ENCODE measurements at regions of chr1 and their contacts with region 1.

Region 1: DNA sequence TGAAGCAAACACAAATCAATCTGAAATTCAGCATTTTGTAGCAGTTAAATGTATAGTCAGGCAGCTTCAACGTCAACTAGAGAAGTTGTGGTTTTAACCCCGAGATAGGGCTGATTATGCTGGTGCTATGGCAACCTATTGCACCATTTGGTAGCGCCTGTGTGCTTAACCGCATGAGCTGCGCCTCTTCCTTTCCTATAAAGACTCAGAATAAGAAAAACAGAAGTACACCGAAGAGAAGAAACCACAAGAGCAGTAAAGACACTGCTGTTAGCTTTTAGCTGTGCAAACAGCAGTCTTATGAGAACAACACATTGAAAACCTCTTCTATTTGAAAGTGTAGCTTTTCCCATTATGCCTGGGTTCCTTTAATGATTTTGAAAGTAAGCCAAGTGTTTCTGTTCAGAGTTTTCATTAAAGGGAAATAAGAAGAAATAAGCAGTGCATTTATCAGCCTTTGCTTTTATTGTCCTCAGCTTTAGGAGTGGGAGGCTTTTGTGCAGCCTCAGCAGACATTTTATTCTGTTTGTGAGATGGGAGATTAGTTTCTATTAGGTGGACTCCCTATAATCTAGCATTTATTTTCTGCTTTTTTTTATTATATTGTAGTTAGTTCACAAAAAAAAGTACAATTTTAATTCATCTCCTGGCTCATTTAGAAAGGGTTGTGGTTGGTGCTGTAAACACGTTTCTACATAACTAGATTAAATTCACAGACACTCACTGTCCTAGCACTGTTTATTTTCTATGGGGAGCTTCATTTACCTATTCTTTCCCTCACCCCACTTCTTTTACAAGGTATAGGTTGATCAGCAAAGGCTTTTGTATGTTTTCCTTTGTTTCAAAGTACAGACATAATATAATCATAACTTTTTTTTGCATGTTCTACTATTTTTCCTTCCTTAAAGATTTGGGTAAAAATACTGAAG is 43.3 kb downstream of the PTPRC start:
- DNase-seq: peak; percentile 97
- ATAC-seq: peak; percentile 93
- H3K4me3 ChIP-seq: peak overlapping the region; percentile 12; the same call in 1 of the 2 replicates
- H3K27ac ChIP-seq: peak overlapping the region; percentile 81
- H3K4me1 ChIP-seq: peaks cover 63% of the 10 kb centered on the region
- H3K27me3 ChIP-seq: no peaks in the 10 kb centered on the region
- CTCF ChIP-seq: no peak
- EP300 ChIP-seq: peak; percentile 77 to 98
- POLR2A ChIP-seq: peak; percentile 48
- RAD21 ChIP-seq: peak; percentile 32

Region 2: DNA sequence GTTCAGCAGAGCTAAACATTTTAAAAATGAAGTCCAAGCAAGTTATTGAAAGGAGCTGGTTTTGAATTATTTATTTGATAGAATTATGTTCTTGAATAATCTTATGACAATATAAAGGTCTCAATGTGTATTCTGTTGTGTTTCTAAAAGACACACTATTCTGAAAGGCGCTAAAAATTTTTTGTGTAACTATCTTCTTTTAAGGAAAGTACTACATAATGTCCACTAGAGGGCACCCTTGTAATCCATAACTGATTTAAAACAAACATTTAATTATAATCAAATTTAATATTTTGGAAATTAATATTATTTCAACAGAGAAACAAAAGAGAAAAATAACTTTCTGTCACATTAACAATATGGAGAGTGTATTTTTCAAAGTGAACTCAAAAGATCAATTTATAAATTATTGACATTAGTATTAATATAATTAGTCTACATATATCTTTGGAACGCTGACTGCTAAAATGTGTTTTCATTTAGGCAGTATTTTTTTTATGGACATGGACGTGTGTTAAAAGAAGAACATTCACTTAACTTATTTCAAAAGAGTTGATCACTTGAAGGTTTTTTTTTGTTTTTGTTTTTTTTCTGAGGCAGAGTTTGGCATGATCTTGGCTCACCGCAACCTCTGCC is 1155.2 kb before region 1 on chr1:
- CTCF ChIA-PET with region 1: no interaction called
- POLR2A ChIA-PET with region 1: no interaction called
- RAD21 ChIA-PET with region 1: no interaction called
- SMC1A ChIA-PET with region 1: no interaction called
- in situ Hi-C with region 1: loop called (anchors 25 kb)
- intact Hi-C with region 1: no loop called
- DNase-seq: no peak
- ATAC-seq: no peak
- H3K4me3 ChIP-seq: no peak overlapping the region
- H3K27ac ChIP-seq: no peak overlapping the region
- H3K4me1 ChIP-seq: no peaks in the 10 kb centered on the region
- H3K27me3 ChIP-seq: no peaks in the 10 kb centered on the region
- CTCF ChIP-seq: peak in 2 of 3 experiments; percentile 29 to 39; a peak in 3 of 6 replicates
- EP300 ChIP-seq: no peak
- POLR2A ChIP-seq: no peak
- RAD21 ChIP-seq: peak; percentile 35; the same call in 1 of the 2 replicates

Region 3: DNA sequence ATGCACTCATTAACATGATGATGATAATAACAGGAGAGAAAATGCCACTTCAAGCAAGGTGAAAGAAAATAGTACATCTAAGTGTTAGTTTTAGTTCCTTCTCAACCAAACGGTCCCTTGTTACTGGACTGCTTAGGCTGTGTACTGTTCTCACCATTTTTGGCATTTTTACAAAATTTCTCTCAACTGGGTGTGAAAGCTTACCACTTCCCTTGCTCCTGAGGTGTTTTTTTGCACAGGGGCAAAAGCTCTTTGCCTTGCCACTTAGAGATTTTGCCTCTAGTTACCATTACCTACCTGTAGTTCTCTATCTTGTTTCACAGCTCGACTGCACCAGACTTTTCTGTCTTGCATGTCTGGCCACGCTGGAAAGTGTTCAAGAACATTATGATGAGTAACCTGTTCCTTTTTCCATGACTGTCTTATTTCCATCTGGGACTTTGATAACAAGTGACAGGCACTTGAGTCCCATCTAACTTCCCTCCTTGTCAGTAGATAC is 514.6 kb before region 1 on chr1:
- CTCF ChIA-PET with region 1: no interaction called
- POLR2A ChIA-PET with region 1: interaction called, 4 read pairs
- RAD21 ChIA-PET with region 1: interaction called, 4 read pairs
- SMC1A ChIA-PET with region 1: interaction called, 5 read pairs
- in situ Hi-C with region 1: loop called (anchors 10 kb)
- intact Hi-C with region 1: no loop called
- DNase-seq: peak; percentile 85
- ATAC-seq: peak; percentile 80
- H3K4me3 ChIP-seq: peak overlapping the region; percentile 57
- H3K27ac ChIP-seq: peak overlapping the region; percentile 59
- H3K4me1 ChIP-seq: peaks cover 47% of the 10 kb centered on the region
- H3K27me3 ChIP-seq: no peaks in the 10 kb centered on the region
- CTCF ChIP-seq: no peak
- EP300 ChIP-seq: peak; percentile 67 to 89; a peak in 3 of 4 replicates
- POLR2A ChIP-seq: no peak
- RAD21 ChIP-seq: no peak

Region 4: DNA sequence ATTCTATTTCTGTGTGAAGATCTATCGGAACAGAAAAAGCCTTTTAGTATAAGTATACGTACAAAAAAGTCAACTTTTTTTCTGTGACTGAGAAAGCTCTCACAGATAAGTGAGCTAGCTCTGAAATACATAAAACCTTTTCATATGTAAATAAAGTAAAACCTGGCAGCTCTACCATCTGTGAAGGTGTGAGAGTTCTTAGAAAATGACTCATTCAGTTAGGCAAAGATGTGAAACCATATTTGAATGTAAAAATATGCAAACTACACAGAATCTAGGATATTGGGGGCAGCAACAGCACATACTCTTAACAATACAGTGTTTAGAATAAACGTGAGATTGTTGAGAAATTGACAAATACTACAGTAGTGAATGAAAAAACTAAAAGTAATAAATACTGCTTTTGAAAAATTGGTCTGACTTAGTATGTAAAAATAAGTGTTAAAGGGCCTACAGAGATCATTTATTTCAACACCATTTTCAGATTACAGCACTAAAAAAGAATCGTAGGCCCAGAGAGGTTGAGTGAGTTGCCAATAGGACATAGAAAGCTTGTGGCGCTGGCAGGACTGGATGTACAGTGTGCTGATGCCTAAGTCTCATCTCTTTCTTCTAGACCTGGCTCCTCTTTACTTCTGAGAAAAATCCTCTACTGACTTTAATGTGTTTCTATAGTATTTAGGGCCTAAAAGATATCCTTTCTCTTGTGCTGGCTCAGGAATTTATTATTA is 161.4 kb before region 1 on chr1:
- CTCF ChIA-PET with region 1: interaction called, 15 read pairs
- POLR2A ChIA-PET with region 1: no interaction called
- RAD21 ChIA-PET with region 1: interaction called, 19 read pairs
- SMC1A ChIA-PET with region 1: interaction called, 12 read pairs
- in situ Hi-C with region 1: no loop called
- intact Hi-C with region 1: loop called (anchors 5 kb)
- DNase-seq: peak; percentile 55
- ATAC-seq: peak; percentile 91
- H3K4me3 ChIP-seq: no peak overlapping the region
- H3K27ac ChIP-seq: no peak overlapping the region
- H3K4me1 ChIP-seq: peaks cover 18% of the 10 kb centered on the region
- H3K27me3 ChIP-seq: no peaks in the 10 kb centered on the region; a peak in 1 of 4 replicates
- CTCF ChIP-seq: no peak
- EP300 ChIP-seq: peak in 1 of 2 experiments; percentile 71; a peak in 2 of 4 replicates
- POLR2A ChIP-seq: no peak
- RAD21 ChIP-seq: no peak

Region 5: GRCh38 chr1:198620951-198621824 is 60.9 kb before region 1 on chr1:
- CTCF ChIA-PET with region 1: interaction called, 30 read pairs
- POLR2A ChIA-PET with region 1: interaction called, 11 read pairs
- RAD21 ChIA-PET with region 1: interaction called, 139 read pairs
- SMC1A ChIA-PET with region 1: interaction called, 165 read pairs
- in situ Hi-C with region 1: no loop called
- intact Hi-C with region 1: loop called (anchors 1 kb)
- DNase-seq: peak; percentile 93
- ATAC-seq: peak; percentile 82
- H3K4me3 ChIP-seq: peak overlapping the region; percentile 50; the same call in 1 of the 2 replicates
- H3K27ac ChIP-seq: peak overlapping the region; percentile 93
- H3K4me1 ChIP-seq: peaks cover 47% of the 10 kb centered on the region
- H3K27me3 ChIP-seq: no peaks in the 10 kb centered on the region
- CTCF ChIP-seq: no peak
- EP300 ChIP-seq: peak; percentile 46 to 71; a peak in 2 of 4 replicates
- POLR2A ChIP-seq: peak; percentile 70
- RAD21 ChIP-seq: peak; percentile 20; the same call in 1 of the 2 replicates

Region 6: DNA sequence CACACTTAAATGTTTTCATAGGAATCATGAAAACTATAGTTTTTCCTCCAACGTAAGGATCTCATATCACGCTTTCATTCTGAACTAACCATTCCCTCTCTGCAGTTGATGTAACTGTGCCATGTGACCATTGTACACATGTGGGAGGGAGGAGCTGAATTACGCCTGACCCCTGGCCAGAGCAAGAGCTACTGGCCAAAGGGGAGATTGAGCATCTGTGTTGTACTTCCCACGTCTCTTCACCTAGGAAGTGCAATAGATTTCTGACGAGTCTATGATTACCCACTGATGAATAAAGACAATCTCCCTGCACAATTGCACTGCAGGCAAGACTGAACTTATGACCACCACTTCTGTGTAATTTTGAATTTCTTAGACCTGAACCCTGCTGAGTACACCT is 19.3 kb before region 1 on chr1:
- CTCF ChIA-PET with region 1: interaction called, 10 read pairs
- POLR2A ChIA-PET with region 1: interaction called, 12 read pairs
- RAD21 ChIA-PET with region 1: interaction called, 26 read pairs
- SMC1A ChIA-PET with region 1: interaction called, 100 read pairs
- in situ Hi-C with region 1: no loop called
- intact Hi-C with region 1: loop called (anchors 2 kb)
- DNase-seq: no peak
- ATAC-seq: peak; percentile 3; the same call in 2 of the 3 replicates
- H3K4me3 ChIP-seq: no peak overlapping the region
- H3K27ac ChIP-seq: no peak overlapping the region
- H3K4me1 ChIP-seq: peaks cover 20% of the 10 kb centered on the region
- H3K27me3 ChIP-seq: no peaks in the 10 kb centered on the region
- CTCF ChIP-seq: no peak
- EP300 ChIP-seq: no peak
- POLR2A ChIP-seq: no peak
- RAD21 ChIP-seq: no peak